ENCODE measurements at regions of chr19 and their contacts with region 1.

Region 1: GRCh38 chr19:39125554-39126311 is at the start of gene PAK4:
- DNase-seq: peak; percentile 99
- ATAC-seq: peak; percentile 94
- H3K4me3 Mint-ChIP-seq: peak within 1 kb of the TSS; percentile 82
- H3K27ac Mint-ChIP-seq: peak within 1 kb of the TSS; percentile 90
- H3K4me1 Mint-ChIP-seq: peaks cover 25% of the 10 kb centered on the region
- H3K27me3 Mint-ChIP-seq: no peaks in the 10 kb centered on the region
- total RNA-seq, gene PAK4: 14.2 to 22.6 TPM

Region 2: GRCh38 chr19:39187559-39187957 is 61.8 kb after region 1 on chr19:
- CTCF ChIA-PET with region 1: interaction called, 4 read pairs
- POLR2A ChIA-PET with region 1: no interaction called
- intact Hi-C with region 1: loop called (anchors 1 kb)
- DNase-seq: no peak
- ATAC-seq: no peak
- H3K4me3 Mint-ChIP-seq: no peak overlapping the region
- H3K27ac Mint-ChIP-seq: no peak overlapping the region
- H3K4me1 Mint-ChIP-seq: no peaks in the 10 kb centered on the region
- H3K27me3 Mint-ChIP-seq: peaks cover 9% of the 10 kb centered on the region

Region 3: GRCh38 chr19:39270036-39270871 is 144.5 kb after region 1 on chr19:
- CTCF ChIA-PET with region 1: no interaction called
- POLR2A ChIA-PET with region 1: no interaction called
- intact Hi-C with region 1: no loop called
- DNase-seq: no peak
- ATAC-seq: no peak
- H3K4me3 Mint-ChIP-seq: no peak overlapping the region
- H3K27ac Mint-ChIP-seq: no peak overlapping the region
- H3K4me1 Mint-ChIP-seq: no peaks in the 10 kb centered on the region
- H3K27me3 Mint-ChIP-seq: peaks cover 11% of the 10 kb centered on the region

Region 4: GRCh38 chr19:39336483-39336882 is 210.8 kb after region 1 on chr19:
- CTCF ChIA-PET with region 1: interaction called, 8 read pairs
- POLR2A ChIA-PET with region 1: no interaction called
- intact Hi-C with region 1: loop called in 1 of 2 experiments (anchors 1 kb)
- DNase-seq: no peak
- ATAC-seq: no peak
- H3K4me3 Mint-ChIP-seq: peak overlapping the region; percentile 96
- H3K27ac Mint-ChIP-seq: peak overlapping the region; percentile 97
- H3K4me1 Mint-ChIP-seq: peaks cover 59% of the 10 kb centered on the region
- H3K27me3 Mint-ChIP-seq: no peaks in the 10 kb centered on the region

Region 5: GRCh38 chr19:39390755-39391592 is 265.2 kb after region 1 on chr19 and contains the starts of genes MED29 and PAF1:
- CTCF ChIA-PET with region 1: no interaction called
- POLR2A ChIA-PET with region 1: no interaction called
- intact Hi-C with region 1: loop called in 1 of 2 experiments (anchors 1 kb)
- DNase-seq: peak; percentile 98
- ATAC-seq: peak; percentile 97
- H3K4me3 Mint-ChIP-seq: peak within 1 kb of the TSS; percentile 99
- H3K27ac Mint-ChIP-seq: peak within 1 kb of the TSS; percentile 98
- H3K4me1 Mint-ChIP-seq: peaks cover 28% of the 10 kb centered on the region
- H3K27me3 Mint-ChIP-seq: no peaks in the 10 kb centered on the region
- total RNA-seq, gene MED29: 24.0 to 34.6 TPM
- total RNA-seq, gene PAF1: 40.4 to 54.2 TPM

Region 6: DNA sequence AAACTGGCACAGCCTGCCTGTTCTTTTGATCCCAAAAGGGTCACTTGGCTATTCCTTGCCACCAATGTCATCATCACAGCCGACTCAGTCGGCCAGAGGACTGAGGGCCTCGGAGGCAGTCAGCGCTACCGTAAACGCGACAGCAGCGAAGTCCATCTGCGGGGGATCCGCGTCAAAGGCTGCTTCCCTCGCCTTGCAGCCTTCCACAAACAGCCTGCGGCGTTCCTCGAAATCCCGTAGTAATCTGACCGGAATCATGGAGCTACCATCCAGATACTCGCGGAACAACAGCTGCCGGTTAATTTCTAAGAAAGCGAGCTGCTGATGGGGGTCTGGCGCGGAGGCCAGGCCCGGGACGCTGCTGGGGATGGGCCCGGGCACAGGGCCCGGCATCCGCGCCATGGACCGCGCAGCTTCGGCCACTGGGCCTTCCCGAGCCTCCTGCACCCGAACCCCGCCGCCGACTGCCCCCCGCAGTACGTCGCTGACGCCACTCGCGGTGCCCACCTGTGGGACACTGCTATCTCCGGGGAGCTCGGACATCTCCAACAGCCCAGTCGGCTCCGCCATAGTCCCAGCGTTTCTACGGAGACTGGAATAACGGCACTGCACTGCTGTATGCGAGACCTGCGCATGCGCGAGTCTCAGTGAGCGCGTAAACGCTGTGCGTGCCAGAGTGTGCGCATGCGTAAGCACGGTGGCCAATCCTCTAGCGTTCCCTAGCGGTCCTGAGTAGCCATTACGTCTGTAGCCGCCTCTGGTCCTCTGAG is 406.7 kb after region 1 on chr19 and contains the start of gene EID2B:
- CTCF ChIA-PET with region 1: no interaction called
- POLR2A ChIA-PET with region 1: no interaction called
- intact Hi-C with region 1: loop called in 1 of 2 experiments (anchors 5 kb)
- DNase-seq: peak; percentile 97
- ATAC-seq: peak; percentile 97
- H3K4me3 Mint-ChIP-seq: peak within 1 kb of the TSS; percentile 93
- H3K27ac Mint-ChIP-seq: peak within 1 kb of the TSS; percentile 86
- H3K4me1 Mint-ChIP-seq: peaks cover 26% of the 10 kb centered on the region
- H3K27me3 Mint-ChIP-seq: no peaks in the 10 kb centered on the region
- total RNA-seq, gene EID2B: 1.4 to 3.5 TPM